Right ventricle myocardium inferior (tissue), 1 donor: ENCODE measurements at regions of chr5 and their contacts with region 1.

Region 1: GRCh38 chr5:76175051-76175666 is 92.0 kb downstream of the SV2C start:
- DNase-seq: no peak
- ATAC-seq: no peak

Region 2: DNA sequence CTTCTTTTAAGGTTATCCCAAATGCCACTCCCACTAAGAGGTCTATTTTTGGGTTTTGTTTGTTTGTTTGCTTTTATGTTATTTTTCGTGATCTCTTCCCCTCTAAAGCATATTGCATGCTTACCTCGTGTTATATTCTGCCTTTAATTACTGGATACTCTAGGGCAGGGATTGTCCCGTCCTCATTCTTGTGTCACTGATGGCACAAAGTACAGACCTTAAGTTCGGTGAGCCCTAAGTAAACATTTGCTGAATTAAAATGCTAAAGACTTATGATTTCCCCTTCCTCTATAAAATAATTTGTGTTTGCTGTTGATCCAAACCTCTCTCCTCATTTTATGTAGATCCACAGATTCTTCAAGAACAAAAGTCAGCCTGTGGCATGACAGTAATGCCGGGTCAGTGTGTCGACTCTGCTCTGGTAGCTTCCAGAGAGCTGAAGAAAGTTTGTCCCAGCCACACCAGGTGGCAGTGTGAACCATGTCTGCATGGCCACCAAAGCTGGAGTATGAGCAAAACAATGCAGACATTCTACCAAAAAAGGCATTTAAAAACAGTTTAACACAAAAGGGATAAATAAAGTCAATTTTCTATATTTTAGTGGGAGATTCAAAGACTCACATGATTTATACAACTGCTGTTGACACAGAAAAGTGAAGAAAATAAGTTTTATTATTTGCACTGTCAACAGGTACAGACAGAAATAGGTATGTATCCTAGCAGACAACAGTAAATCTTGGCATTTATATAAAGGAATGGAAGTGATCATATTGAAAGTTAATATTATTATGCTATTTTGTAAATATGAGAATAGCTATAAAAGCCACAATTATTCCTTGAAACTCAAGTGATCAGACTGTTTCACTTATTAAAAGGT is 440.0 kb before region 1 on chr5:
- intact Hi-C with region 1: loop called (anchors 2 kb)
- DNase-seq: no peak
- ATAC-seq: no peak

Region 3: DNA sequence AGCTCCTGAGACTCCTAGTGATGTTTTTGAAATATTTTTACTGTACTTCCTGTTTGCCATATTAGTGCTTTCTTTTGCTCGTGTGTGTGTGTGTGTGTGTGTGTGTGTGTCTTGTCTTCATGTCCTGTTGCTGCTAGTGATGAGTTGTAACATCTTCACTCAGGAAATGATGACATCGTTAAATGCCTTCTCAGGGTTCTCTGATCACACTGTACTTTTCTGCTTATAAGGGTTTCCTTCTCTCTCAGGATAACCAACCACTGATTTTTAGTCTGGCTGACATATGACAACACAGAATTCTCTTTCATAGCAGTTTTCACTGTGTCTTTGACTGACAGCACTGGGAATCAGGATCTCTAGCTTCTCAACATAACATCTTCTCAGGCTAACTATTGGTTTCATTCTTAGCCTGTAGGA is 75.9 kb before region 1 on chr5:
- intact Hi-C with region 1: no loop called
- DNase-seq: no peak
- ATAC-seq: no peak